Right ventricle myocardium inferior (tissue), 1 donor: ENCODE measurements at regions of chrX and their contacts with region 1.

Region 1: GRCh38 chrX:53093748-53094583 is at the start of gene KANTR:
- DNase-seq: peak; percentile 89
- ATAC-seq: peak; percentile 93
- total RNA-seq, gene KANTR: 3.4 TPM

Region 2: DNA sequence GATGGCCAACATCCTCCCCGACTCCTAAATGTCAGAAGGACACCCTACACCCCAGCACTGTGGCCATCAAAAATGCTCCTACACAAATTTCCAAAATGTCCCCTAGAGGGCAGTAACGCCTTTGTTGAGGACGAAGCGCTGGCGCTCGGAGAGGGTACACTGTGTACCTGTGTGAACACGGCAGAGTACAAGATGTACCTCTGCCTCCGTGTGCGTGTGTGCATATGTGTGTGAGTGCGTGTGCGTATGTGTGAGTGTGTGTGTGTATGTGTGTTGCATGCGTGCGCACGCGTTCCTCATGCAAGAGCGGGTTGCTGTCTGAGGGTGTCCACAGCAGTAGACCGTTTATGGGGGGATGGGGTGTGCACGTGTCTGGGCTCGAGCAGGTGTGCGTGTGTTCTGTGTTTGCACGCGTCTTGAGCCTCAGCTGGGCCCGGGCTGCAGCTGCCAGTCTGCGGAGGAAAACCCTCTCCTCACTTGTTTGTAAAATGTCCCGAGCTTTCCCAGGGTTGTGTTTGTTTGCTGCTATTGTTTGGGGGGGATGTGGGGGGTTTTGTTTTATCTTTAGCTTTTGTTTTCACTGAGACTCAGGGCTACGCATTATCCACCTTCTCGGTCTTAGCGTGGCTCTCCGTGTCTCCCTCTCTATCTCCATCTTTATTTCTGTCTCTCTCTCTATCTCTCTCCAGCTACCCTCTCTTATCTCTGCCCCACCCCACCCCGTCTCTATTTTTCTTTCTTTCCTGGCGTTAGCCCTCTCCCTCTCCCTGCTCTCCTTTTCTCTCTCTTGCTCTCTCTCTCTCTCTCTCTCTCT is 22.2 kb before region 1 on chrX:
- intact Hi-C with region 1: loop called (anchors 1 kb)
- DNase-seq: peak; percentile 88
- ATAC-seq: peak; percentile 93

Region 3: GRCh38 chrX:53081925-53082772 is 11.8 kb before region 1 on chrX and contains the start of gene TSPYL2:
- intact Hi-C with region 1: loop called (anchors 1 kb)
- DNase-seq: peak; percentile 94
- ATAC-seq: peak; percentile 96
- total RNA-seq, gene TSPYL2: 34.1 TPM

Region 4: DNA sequence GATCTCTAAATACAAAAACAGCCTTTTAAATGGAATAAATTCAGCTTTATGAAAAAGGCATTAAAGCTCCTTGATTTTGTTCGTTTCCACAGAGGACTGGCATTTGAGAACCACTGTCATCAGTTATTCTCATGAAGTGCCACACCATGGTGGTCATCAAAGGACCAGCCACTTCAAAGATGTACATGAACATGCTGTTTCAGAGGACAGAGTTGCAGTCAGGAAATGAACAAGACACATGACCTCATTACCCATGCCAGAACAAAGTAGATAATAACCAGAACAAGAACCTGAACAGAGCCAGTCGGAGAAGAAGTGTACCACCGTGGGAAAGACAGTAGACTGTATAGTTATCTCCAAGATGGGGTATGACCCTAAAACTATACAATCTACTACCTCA is 462.9 kb after region 1 on chrX:
- intact Hi-C with region 1: no loop called
- DNase-seq: no peak
- ATAC-seq: no peak